ENCODE measurements at regions of chr20 and their contacts with region 1.

Region 1: GRCh38 chr20:35954200-35954906 is at the start of gene SCAND1:
- DNase-seq: peak; percentile 96
- ATAC-seq: peak; percentile 96
- H3K4me3 Mint-ChIP-seq: peak within 1 kb of the TSS; percentile 98
- H3K27ac Mint-ChIP-seq: peak within 1 kb of the TSS; percentile 99
- H3K4me1 Mint-ChIP-seq: peaks cover 10% of the 10 kb centered on the region
- H3K27me3 Mint-ChIP-seq: peaks cover 3% of the 10 kb centered on the region
- CTCF ChIP-seq: peak; percentile 45
- total RNA-seq, gene SCAND1: 94.2 to 103 TPM (median 94.6 TPM) in 3 replicates

Region 2: GRCh38 chr20:35601008-35601973 is 353.1 kb before region 1 on chr20:
- CTCF ChIA-PET with region 1: interaction called, 11 read pairs
- POLR2A ChIA-PET with region 1: interaction called, 3 read pairs
- DNase-seq: peak; percentile 80
- ATAC-seq: peak; percentile 63
- H3K4me3 Mint-ChIP-seq: peak overlapping the region; percentile 76
- H3K27ac Mint-ChIP-seq: no peak overlapping the region
- H3K4me1 Mint-ChIP-seq: peaks cover 9% of the 10 kb centered on the region
- H3K27me3 Mint-ChIP-seq: peaks cover 74% of the 10 kb centered on the region
- CTCF ChIP-seq: no peak

Region 3: GRCh38 chr20:35726759-35727711 is 227.3 kb before region 1 on chr20:
- CTCF ChIA-PET with region 1: no interaction called
- POLR2A ChIA-PET with region 1: no interaction called
- DNase-seq: no peak
- ATAC-seq: no peak
- H3K4me3 Mint-ChIP-seq: no peak overlapping the region
- H3K27ac Mint-ChIP-seq: no peak overlapping the region
- H3K4me1 Mint-ChIP-seq: no peaks in the 10 kb centered on the region
- H3K27me3 Mint-ChIP-seq: no peaks in the 10 kb centered on the region
- CTCF ChIP-seq: no peak

Region 4: GRCh38 chr20:35757098-35757705 is 197.2 kb before region 1 on chr20:
- CTCF ChIA-PET with region 1: no interaction called
- POLR2A ChIA-PET with region 1: no interaction called
- DNase-seq: no peak
- ATAC-seq: no peak; the same call in 1 of the 2 replicates
- H3K4me3 Mint-ChIP-seq: no peak overlapping the region
- H3K27ac Mint-ChIP-seq: no peak overlapping the region
- H3K4me1 Mint-ChIP-seq: no peaks in the 10 kb centered on the region
- H3K27me3 Mint-ChIP-seq: no peaks in the 10 kb centered on the region
- CTCF ChIP-seq: no peak

Region 5: GRCh38 chr20:35771689-35772562 is 182.4 kb before region 1 on chr20 and contains the start of gene PHF20:
- CTCF ChIA-PET with region 1: interaction called, 5 read pairs
- POLR2A ChIA-PET with region 1: interaction called, 10 read pairs
- DNase-seq: peak; percentile 99
- ATAC-seq: peak; percentile 89
- H3K4me3 Mint-ChIP-seq: peak within 1 kb of the TSS; percentile 91
- H3K27ac Mint-ChIP-seq: peak within 1 kb of the TSS; percentile 67
- H3K4me1 Mint-ChIP-seq: peaks cover 53% of the 10 kb centered on the region
- H3K27me3 Mint-ChIP-seq: peaks cover 20% of the 10 kb centered on the region
- CTCF ChIP-seq: no peak
- total RNA-seq, gene PHF20: 65.8 to 70.0 TPM (median 66.8 TPM) in 3 replicates

Region 6: DNA sequence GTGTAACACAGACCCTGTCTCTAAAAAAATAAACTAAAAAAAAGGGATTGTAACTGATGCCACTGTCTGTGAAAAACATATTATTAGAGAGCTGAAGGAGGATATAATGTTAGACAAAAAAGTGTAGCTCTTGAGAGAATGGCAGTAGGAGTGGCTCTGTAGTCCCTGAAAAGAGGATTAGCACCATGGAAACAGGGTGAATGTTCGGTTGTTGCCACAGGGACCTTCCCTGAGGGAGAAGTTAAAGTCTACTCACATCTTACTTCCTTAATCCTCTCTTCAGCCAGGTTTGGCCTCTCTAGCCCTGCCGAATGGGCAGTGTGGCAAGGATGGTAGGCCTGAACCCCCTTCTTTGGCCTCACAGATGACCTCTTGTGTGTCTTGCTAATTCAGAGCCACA is 12.1 kb before region 1 on chr20:
- CTCF ChIA-PET with region 1: interaction called, 23 read pairs
- POLR2A ChIA-PET with region 1: no interaction called
- DNase-seq: no peak
- ATAC-seq: no peak
- H3K4me3 Mint-ChIP-seq: no peak overlapping the region
- H3K27ac Mint-ChIP-seq: no peak overlapping the region
- H3K4me1 Mint-ChIP-seq: peaks cover 13% of the 10 kb centered on the region
- H3K27me3 Mint-ChIP-seq: no peaks in the 10 kb centered on the region
- CTCF ChIP-seq: no peak

Region 7: GRCh38 chr20:36064658-36065426 is 110.5 kb after region 1 on chr20:
- CTCF ChIA-PET with region 1: interaction called, 10 read pairs
- POLR2A ChIA-PET with region 1: interaction called, 4 read pairs
- DNase-seq: peak; percentile 98
- ATAC-seq: peak; percentile 95
- H3K4me3 Mint-ChIP-seq: peak overlapping the region; percentile 71
- H3K27ac Mint-ChIP-seq: no peak overlapping the region
- H3K4me1 Mint-ChIP-seq: peaks cover 7% of the 10 kb centered on the region; the same call in 1 of the 2 replicates
- H3K27me3 Mint-ChIP-seq: peaks cover 44% of the 10 kb centered on the region
- CTCF ChIP-seq: no peak

Region 8: DNA sequence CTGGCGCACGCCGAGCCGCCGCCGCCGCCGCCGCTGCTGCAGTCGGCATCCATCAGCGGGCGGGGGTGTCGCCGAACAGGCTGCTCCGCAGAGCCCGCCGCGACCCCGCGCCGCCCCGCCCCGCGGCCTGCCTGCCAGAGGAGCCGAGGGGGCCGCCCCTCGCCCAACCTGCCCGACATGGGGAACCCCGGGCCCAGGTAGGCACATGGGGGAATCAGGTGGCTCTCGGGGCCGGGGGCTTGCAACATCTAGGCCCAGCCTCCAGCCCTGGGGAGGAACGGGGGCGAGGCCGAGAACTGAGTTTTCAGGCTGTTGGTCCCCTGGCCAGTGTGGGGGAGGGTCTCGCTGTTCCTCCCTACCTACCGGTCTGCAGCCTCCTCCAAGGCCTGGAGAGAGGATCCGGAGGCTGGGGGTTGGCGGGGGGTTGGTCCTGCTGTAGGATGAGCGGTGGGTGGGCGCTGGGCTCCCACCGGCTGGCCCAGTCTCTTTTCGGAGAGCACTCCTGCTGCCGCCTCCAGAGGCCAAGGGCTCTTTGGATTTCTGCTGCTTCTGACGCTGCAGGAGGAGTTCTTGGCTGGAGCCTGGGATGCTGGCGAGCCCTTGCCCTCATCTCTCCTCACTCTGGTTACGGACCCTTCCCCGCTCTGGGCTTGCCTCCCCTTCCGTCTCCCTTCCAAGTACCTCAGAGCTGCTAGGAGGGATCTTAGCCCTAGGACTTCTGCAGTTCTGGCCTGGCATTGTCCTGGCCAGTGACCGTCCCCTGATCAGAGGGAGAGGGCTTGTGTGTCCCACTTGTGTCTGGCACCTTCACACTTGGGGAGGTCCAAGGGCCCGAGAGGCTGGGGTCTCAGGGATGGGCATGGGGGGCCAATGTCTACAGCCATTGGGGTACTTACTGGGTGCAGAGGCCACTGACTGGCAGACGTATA is 200.6 kb after region 1 on chr20 and contains the start of gene EPB41L1:
- CTCF ChIA-PET with region 1: interaction called, 10 read pairs
- POLR2A ChIA-PET with region 1: no interaction called
- DNase-seq: peak; percentile 57
- ATAC-seq: peak; percentile 49
- H3K4me3 Mint-ChIP-seq: peak within 1 kb of the TSS; percentile 78
- H3K27ac Mint-ChIP-seq: no peak within 1 kb of the TSS
- H3K4me1 Mint-ChIP-seq: peaks cover 23% of the 10 kb centered on the region
- H3K27me3 Mint-ChIP-seq: peaks cover 21% of the 10 kb centered on the region
- CTCF ChIP-seq: no peak
- total RNA-seq, gene EPB41L1: 37.7 to 38.7 TPM (median 38.1 TPM) in 3 replicates

Region 9: GRCh38 chr20:36248836-36249235 is 294.5 kb after region 1 on chr20:
- CTCF ChIA-PET with region 1: no interaction called
- POLR2A ChIA-PET with region 1: no interaction called
- DNase-seq: no peak
- ATAC-seq: no peak
- H3K4me3 Mint-ChIP-seq: no peak overlapping the region
- H3K27ac Mint-ChIP-seq: no peak overlapping the region
- H3K4me1 Mint-ChIP-seq: peaks cover 8% of the 10 kb centered on the region
- H3K27me3 Mint-ChIP-seq: no peaks in the 10 kb centered on the region
- CTCF ChIP-seq: no peak

Measured in WTC11 (cell line).